B cell (primary cell): ENCODE measurements at regions of chr3 and their contacts with region 1.

Region 1: DNA sequence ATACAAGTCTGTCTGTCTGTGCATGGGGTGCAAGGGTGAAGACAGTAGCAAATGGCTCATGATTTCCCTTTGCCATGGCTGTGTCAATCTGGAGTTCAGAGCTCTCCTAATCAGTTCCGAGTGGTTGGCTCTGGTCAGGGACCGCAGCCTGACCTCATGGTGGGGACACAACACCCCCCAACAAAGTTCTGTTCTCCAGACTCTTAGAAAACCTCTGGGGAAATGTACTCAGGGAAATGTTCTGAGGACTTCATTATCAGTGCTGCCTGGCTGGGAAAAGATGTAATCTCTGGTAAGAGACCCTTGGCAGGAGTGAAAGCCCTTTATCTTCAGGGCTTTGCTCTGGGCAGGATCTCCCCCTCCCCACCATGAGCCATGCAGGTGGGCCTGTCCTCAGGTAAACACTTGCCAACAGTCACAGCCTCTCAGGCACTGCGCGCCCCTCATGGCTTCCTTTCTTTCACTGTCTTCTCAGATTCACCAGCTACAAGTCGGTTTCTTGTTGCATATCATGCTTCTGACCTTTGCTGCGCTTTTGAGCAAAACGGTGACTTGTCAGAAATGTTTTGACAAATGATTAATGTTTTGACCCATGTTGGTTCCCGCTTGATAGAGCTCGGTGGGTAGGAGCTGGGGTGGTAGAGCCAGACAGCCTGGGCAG is 95.5 kb downstream of the ST6GAL1 start:
- DNase-seq: peak; percentile 55
- ATAC-seq: peak; percentile 37
- H3K4me3 ChIP-seq: peak overlapping the region; percentile 19 to 65 (median 42)
- H3K4me3 Mint-ChIP-seq: peak overlapping the region; percentile 89
- H3K27ac ChIP-seq: peak overlapping the region; percentile 86 to 87
- H3K27ac Mint-ChIP-seq: peak overlapping the region; percentile 90
- H3K4me1 ChIP-seq: peaks cover 84 to 92% of the 10 kb centered on the region in 2 donors
- H3K4me1 Mint-ChIP-seq: peaks cover 76% of the 10 kb centered on the region
- H3K27me3 ChIP-seq: no peaks in the 10 kb centered on the region
- H3K27me3 Mint-ChIP-seq: no peaks in the 10 kb centered on the region
- CTCF ChIP-seq: no peak

Region 2: GRCh38 chr3:186826976-186827731 is 198.6 kb before region 1 on chr3:
- CTCF ChIA-PET with region 1: no interaction called
- POLR2A ChIA-PET with region 1: no interaction called
- intact Hi-C with region 1: loop called (anchors 5 kb)
- DNase-seq: peak; percentile 92
- ATAC-seq: peak; percentile 95
- H3K4me3 ChIP-seq: peak overlapping the region in 4 of 5 experiments; percentile 57 to 78 (median 70)
- H3K4me3 Mint-ChIP-seq: peak overlapping the region; percentile 79
- H3K27ac ChIP-seq: peak overlapping the region in 1 of 2 donors; percentile 55
- H3K27ac Mint-ChIP-seq: peak overlapping the region; percentile 41
- H3K4me1 ChIP-seq: peaks cover 24 to 28% of the 10 kb centered on the region in 2 donors
- H3K4me1 Mint-ChIP-seq: peaks cover 21% of the 10 kb centered on the region
- H3K27me3 ChIP-seq: peaks cover 0 to 69% (median 42%) of the 10 kb centered on the region in 4 experiments
- H3K27me3 Mint-ChIP-seq: peaks cover 54% of the 10 kb centered on the region
- CTCF ChIP-seq: no peak

Region 3: DNA sequence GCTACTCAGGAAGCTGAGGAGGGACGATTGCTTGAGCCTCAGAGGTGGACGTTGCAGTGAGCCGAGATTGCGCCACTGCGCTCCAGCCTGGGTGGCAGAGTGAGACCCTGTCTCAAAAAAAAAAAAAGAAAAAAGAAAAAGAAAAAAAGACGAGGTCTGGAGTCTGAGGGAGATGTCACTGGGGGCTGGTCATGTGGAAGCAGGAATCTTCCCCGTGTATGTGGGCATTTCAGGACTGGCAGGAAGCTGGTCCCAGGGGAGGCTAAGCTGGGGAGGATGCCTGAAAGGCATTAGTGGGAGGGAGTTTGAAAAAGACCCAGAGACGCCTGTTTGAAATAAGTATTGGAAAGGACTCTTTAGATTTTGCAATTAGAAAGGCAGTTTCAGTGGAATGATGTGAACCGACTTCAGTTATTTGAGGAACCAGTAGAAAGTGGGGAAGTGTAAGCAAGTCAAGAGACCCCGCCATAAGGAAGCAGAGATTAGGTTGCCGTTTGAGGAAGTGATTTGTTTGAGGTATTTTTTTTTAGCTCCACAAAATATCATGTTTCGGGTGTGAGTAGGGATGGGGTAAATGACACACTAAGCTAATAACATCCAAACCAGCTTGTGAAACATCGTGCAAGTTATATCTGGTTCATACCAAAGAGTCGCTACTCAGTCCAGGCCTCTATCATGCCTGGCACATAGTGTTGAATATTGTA is 40.0 kb before region 1 on chr3:
- CTCF ChIA-PET with region 1: interaction called, 5 read pairs
- POLR2A ChIA-PET with region 1: interaction called, 13 read pairs
- intact Hi-C with region 1: loop called (anchors 5 kb)
- DNase-seq: peak; percentile 80
- ATAC-seq: peak; percentile 85
- H3K4me3 ChIP-seq: peak overlapping the region in 4 of 5 experiments; percentile 18 to 48 (median 27)
- H3K4me3 Mint-ChIP-seq: peak overlapping the region; percentile 78
- H3K27ac ChIP-seq: peak overlapping the region; percentile 78 to 80
- H3K27ac Mint-ChIP-seq: peak overlapping the region; percentile 82
- H3K4me1 ChIP-seq: peaks cover 64 to 83% of the 10 kb centered on the region in 2 donors
- H3K4me1 Mint-ChIP-seq: peaks cover 87% of the 10 kb centered on the region
- H3K27me3 ChIP-seq: no peaks in the 10 kb centered on the region
- H3K27me3 Mint-ChIP-seq: no peaks in the 10 kb centered on the region
- CTCF ChIP-seq: no peak

Region 4: DNA sequence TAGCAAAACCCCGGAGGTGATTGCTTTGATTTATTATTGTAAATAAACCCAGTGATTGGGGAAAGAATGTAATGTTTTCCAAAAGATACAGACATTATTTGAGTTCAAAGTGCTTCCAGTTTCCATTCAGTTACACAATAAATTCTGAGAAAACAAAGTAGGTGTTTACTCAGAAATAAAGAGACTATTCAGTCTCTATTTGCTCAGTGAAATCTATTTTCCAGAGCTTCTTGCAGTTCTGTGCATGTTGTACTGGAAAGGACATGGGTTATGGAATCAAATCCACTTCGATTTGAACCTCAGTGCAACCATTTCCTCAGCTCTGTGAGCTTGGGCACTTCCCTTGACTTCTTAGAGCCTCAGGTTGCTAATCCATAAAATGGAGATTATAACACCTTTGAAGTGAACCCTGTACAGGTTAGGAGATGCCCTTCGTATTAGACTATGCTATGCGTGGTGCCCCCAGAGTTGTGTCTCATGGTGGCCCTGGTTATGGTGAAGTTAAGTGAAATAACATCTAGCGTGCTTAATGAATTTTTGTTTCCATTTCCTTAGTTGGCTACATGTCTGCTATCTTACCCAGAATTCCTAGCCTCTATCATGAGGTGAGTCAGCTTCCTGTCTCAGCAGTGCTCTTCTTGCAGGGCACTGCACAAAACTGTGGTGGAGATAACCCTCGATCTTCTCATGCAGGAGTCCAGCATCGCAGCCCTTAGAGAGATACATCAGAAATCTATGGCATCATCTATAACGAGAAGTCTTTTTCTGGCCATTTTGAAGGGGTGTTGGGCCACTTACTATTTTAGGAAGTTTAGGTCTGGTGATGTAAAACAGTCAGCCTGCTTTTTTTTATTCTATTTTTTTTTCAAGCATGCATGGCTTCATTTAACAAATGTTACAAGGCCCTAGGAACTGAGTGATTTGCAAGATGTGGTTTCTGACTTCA is 15.8 kb after region 1 on chr3:
- CTCF ChIA-PET with region 1: interaction called, 19 read pairs
- POLR2A ChIA-PET with region 1: interaction called, 6 read pairs
- intact Hi-C with region 1: loop called (anchors 2 kb)
- DNase-seq: peak; percentile 70
- ATAC-seq: peak; percentile 79
- H3K4me3 ChIP-seq: peak overlapping the region in 1 of 5 experiments; percentile 31
- H3K4me3 Mint-ChIP-seq: peak overlapping the region; percentile 75
- H3K27ac ChIP-seq: peak overlapping the region; percentile 89 to 92
- H3K27ac Mint-ChIP-seq: peak overlapping the region; percentile 90
- H3K4me1 ChIP-seq: peaks cover 83 to 84% of the 10 kb centered on the region in 2 donors
- H3K4me1 Mint-ChIP-seq: peaks cover 84% of the 10 kb centered on the region
- H3K27me3 ChIP-seq: no peaks in the 10 kb centered on the region
- H3K27me3 Mint-ChIP-seq: no peaks in the 10 kb centered on the region
- CTCF ChIP-seq: no peak

Region 5: DNA sequence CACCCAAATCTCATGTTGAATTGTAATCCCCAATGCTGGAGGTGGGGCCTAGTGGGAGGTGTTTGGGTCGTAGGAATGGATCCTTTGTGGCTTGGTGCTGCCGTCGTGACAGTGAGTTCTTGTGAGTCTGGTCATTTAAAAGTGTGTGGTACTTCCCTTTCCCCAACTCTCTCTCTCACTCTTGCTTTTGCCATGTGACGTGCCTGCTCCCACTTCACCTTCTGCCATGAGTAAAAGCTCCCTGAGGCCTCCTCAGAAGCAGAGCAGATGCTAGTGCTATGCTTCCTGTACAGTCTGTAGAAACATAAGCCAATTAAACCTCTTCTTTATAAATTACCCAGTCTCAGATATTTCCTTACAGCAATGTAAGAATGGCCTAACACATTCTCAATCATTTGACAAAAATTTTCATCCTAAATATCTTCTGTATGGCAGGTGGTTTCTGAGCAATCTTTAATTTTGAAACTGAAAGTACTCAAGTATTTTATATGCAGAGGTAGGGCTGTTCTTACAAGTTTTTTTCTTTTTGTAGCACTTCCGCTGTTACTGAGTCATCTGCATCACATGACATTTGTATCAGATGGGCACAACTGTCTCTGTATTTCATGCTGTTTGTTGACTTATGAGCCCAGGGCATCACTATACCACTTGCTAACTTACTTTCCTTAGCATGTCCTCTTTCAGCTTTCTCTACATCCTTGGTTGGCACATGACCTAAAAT is 104.7 kb after region 1 on chr3:
- CTCF ChIA-PET with region 1: interaction called, 4 read pairs
- POLR2A ChIA-PET with region 1: no interaction called
- intact Hi-C with region 1: loop called (anchors 5 kb)
- DNase-seq: peak; percentile 84
- ATAC-seq: peak; percentile 92
- H3K4me3 ChIP-seq: peak overlapping the region in 1 of 5 experiments; percentile 28
- H3K4me3 Mint-ChIP-seq: peak overlapping the region; percentile 70
- H3K27ac ChIP-seq: peak overlapping the region; percentile 84 to 90
- H3K27ac Mint-ChIP-seq: peak overlapping the region; percentile 88
- H3K4me1 ChIP-seq: peaks cover 31 to 35% of the 10 kb centered on the region in 2 donors
- H3K4me1 Mint-ChIP-seq: peaks cover 46% of the 10 kb centered on the region
- H3K27me3 ChIP-seq: no peaks in the 10 kb centered on the region
- H3K27me3 Mint-ChIP-seq: no peaks in the 10 kb centered on the region
- CTCF ChIP-seq: no peak